Adrenal gland (tissue), 19 donors: ENCODE measurements at regions of chr1 and their contacts with region 1.

Region 1: DNA sequence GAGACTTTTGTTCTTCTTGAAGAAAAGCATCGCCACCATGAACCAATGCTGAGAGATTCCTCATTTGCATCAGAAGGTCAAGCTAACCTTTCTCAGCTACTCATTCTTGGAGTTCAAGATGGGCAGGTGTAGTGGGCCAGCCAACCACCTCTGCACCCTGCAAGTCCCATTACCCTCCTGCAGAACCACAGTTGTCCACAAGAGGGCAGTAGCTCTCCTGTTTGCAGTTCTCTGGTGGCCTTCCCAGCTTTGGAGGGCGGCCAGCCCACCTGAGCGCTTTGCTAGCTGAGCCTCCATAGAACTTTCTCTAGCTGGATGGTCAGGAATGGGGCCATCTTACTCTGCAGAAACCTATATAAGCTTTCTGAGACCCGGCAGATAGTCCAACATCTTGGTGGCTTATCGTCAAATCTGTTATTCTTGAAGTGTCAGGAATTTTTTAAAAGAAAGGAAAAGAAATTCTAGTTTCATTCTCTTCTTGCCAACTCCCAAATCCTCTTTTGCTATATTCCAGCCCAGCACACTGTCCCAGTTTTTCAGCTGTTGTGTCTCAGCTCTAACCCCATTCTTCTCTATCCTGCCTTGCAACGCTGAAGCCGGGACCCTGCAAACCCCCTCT is 11.0 kb upstream of the LMX1A start:
- DNase-seq: peak; percentile 76 to 92 (median 86)
- H3K4me3 ChIP-seq: no peak overlapping the region
- H3K27ac ChIP-seq: no peak overlapping the region
- H3K4me1 ChIP-seq: no peaks in the 10 kb centered on the region
- H3K27me3 ChIP-seq: peaks cover 27% of the 10 kb centered on the region
- CTCF ChIP-seq: peak; percentile 64 to 92 (median 78)
- POLR2A ChIP-seq: no peak

Region 2: GRCh38 chr1:165144757-165145397 is 222.6 kb before region 1 on chr1:
- intact Hi-C with region 1: loop called in 1 of 2 experiments (anchors 10 kb)
- DNase-seq: peak; percentile 16 to 74 (median 40)
- H3K4me3 ChIP-seq: no peak overlapping the region
- H3K27ac ChIP-seq: no peak overlapping the region
- H3K4me1 ChIP-seq: no peaks in the 10 kb centered on the region
- H3K27me3 ChIP-seq: peaks cover 5% of the 10 kb centered on the region
- CTCF ChIP-seq: peak; percentile 17 to 73 (median 52)
- POLR2A ChIP-seq: no peak